ENCODE measurements at regions of chr1 and their contacts with region 1.

Region 1: DNA sequence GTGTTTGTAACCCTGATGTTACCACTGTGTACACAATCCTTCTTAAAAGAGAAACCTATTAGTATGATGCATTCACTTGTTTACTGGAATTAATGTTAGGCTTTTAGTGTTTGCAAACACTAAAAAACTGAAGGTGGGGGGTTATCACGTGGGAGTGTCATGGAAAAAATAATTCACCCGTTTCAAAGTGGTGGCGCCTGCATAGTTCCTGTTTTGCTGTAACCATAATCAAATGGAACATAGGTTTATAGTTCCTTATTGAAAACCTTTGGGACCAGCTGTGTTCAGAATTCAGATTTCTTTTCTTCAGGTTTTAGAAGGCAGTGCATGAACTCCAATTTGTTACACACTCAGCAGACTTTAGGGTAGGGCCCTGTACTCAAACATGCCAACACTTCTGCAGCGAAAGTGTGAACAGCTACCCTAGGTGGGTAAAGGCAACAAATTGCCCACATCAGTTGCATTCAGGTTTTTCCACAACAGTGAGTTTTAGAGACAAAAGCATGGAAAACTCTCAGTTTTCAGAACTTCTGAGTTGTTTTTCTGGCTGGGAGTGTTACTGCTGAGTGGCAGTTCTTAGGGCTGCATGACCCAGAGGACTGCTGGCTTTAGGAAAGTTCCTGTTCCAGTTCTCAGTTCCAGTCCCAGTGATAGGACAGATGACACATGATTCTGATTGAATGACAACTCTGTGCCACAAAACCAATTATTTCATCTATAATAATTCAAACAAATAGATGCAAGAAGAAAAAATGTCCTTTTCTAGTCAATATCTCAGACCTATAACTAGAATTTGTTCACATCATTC is 29.1 kb upstream of the IVNS1ABP start:
- DNase-seq: no peak
- ATAC-seq: peak in 3 of 4 donors; percentile 55 to 67 (median 62)
- H3K4me3 ChIP-seq: no peak overlapping the region
- H3K27ac ChIP-seq: peak overlapping the region in 4 of 12 donors; percentile 6 to 84 (median 35)
- H3K4me1 ChIP-seq: peaks cover 0 to 17% (median 0%) of the 10 kb centered on the region in 12 donors
- H3K27me3 ChIP-seq: no peaks in the 10 kb centered on the region
- CTCF ChIP-seq: no peak
- POLR2A ChIP-seq: no peak

Region 2: GRCh38 chr1:185541871-185542301 is 195.8 kb after region 1 on chr1:
- intact Hi-C with region 1: loop called in 1 of 10 experiments (anchors 10 kb)
- DNase-seq: no peak
- ATAC-seq: no peak
- H3K4me3 ChIP-seq: no peak overlapping the region
- H3K27ac ChIP-seq: no peak overlapping the region
- H3K4me1 ChIP-seq: peaks cover 0 to 8% (median 0%) of the 10 kb centered on the region in 12 donors
- H3K27me3 ChIP-seq: no peaks in the 10 kb centered on the region
- CTCF ChIP-seq: no peak
- POLR2A ChIP-seq: no peak

Measured in heart left ventricle (tissue), 16 donors.